H1 (cell line): ENCODE measurements at regions of chr18 and their contacts with region 1.

Region 1: GRCh38 chr18:58241877-58242276 is 197.9 kb downstream of the NEDD4L start:
- DNase-seq: no peak
- H3K4me3 ChIP-seq: no peak overlapping the region
- H3K27ac ChIP-seq: no peak overlapping the region
- H3K4me1 ChIP-seq: peaks cover 0 to 6% (median 2%) of the 10 kb centered on the region in 4 experiments; a peak in 6 of 7 replicates
- H3K27me3 ChIP-seq: no peaks in the 10 kb centered on the region
- CTCF ChIP-seq: no peak
- EP300 ChIP-seq: no peak
- POLR2A ChIP-seq: no peak
- RAD21 ChIP-seq: no peak

Region 2: DNA sequence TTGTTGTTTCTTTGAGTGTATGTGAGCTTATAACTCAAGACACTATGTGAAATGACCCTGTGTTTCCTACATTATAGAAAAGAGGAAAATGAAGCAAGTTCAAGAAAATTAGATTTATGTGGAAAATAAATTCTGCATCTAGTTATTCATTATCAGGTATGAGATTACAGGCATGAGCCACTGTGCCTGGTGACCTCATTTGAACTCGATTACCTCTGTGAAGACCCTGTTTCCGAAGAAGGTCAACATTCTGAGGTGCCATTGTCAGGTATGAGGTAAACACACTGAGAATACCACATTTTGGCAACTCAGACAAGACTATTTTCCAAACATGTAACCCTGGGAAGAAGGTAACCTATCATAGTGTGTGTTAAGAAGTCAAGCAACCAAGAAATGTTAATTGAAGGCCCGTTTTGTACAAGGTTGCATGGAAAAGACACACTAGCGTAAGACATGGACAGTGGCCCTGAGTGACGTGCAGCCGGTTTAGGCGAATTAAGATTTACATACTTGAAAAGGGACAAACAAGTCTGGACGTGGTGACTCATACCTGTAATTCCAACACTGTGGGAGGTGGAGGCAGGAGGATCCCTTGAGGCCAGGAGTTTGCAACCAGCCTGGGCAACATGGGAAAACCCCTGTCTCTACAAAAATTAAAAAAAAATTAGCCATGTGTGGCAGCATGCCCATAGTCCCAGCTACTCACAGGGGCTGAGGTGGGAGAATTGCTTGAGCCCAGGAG is 11.3 kb before region 1 on chr18:
- CTCF ChIA-PET with region 1: interaction called, 14 read pairs
- POLR2A ChIA-PET with region 1: no interaction called
- DNase-seq: no peak
- H3K4me3 ChIP-seq: no peak overlapping the region; a peak in 1 of 8 replicates
- H3K27ac ChIP-seq: no peak overlapping the region
- H3K4me1 ChIP-seq: peaks cover 10 to 36% (median 26%) of the 10 kb centered on the region in 4 experiments
- H3K27me3 ChIP-seq: no peaks in the 10 kb centered on the region
- CTCF ChIP-seq: no peak
- EP300 ChIP-seq: no peak
- POLR2A ChIP-seq: no peak
- RAD21 ChIP-seq: no peak

Region 3: GRCh38 chr18:58314284-58314683 is 72.4 kb after region 1 on chr18:
- CTCF ChIA-PET with region 1: no interaction called
- POLR2A ChIA-PET with region 1: no interaction called
- DNase-seq: no peak
- H3K4me3 ChIP-seq: no peak overlapping the region
- H3K27ac ChIP-seq: no peak overlapping the region
- H3K4me1 ChIP-seq: peaks cover 0 to 7% (median 3%) of the 10 kb centered on the region in 4 experiments; a peak in 6 of 7 replicates
- H3K27me3 ChIP-seq: no peaks in the 10 kb centered on the region
- CTCF ChIP-seq: no peak
- EP300 ChIP-seq: no peak
- POLR2A ChIP-seq: no peak
- RAD21 ChIP-seq: no peak